Transverse colon (tissue), 4 donors: ENCODE measurements at regions of chr6 and their contacts with region 1.

Region 1: DNA sequence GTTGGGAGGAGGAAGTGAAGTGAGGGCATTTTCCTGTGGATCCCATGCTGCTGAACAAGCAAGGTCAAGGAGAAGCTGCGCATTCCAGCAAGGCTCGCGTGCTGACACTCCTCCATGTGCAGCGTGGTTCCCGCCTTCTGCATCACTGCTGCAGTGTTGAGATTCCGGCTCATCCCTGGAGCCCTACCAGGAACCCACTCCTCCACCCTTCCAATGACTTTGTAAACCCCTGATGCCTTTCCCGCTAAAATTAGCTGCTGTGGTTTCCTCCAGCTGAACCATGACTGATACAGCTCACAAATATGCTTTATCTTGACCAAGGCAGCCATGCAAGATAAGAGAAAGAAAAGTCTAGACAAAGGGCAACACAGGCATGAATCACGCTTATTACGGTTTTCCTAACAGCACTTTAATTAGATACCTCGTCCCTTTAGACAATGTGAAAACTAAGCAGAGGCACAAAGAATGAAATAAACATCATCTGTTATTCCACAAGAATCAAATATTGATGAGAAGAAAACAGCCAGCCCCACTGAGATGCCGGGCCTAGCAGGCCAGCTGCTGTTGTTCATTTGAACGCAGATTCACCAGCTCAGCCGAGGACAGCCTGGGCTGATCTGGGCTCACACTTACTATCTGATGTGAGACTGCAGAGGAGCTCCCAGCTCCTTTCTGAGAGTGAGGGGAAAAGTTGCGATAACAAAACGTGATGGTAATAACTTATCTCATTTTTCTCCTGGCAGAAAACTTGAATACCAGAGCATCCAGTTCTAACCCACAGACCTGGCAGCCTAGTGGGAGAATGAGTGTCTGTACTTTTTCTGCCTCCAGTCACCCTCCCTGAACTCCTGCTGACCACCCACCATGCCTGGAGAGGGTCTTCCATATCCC is 14.2 kb upstream of the BNIP5 start:
- DNase-seq: no peak
- H3K4me3 ChIP-seq: no peak overlapping the region
- H3K27ac ChIP-seq: no peak overlapping the region
- H3K4me1 ChIP-seq: no peaks in the 10 kb centered on the region
- H3K27me3 ChIP-seq: no peaks in the 10 kb centered on the region
- CTCF ChIP-seq: no peak
- EP300 ChIP-seq: no peak
- POLR2A ChIP-seq: no peak

Region 2: DNA sequence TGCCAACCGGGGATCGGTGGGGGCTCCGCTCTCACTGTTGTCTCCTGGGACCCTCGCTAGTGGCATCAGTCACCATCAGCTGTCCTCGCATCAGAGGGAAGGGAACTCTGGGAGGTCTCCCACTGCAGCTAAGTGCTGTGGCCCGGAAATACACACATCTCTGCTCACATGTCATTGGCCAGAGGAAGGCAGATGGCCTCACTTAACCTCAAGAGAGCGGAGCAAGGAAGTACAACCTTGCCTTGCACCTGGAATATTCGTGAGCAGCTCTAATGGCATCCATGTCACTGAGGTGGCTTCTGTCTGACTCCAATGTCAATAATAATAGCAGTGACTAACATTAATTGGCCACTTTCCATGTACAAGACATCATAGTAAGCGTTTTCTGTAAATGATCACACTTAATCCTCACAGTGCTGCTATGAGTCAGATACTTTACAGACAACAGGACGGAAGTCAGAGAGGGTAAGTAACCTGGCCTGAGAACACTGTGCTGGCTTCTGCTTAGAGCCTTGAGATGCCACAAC is 539.9 kb before region 1 on chr6:
- in situ Hi-C with region 1: no loop called
- intact Hi-C with region 1: no loop called
- DNase-seq: no peak
- H3K4me3 ChIP-seq: no peak overlapping the region
- H3K27ac ChIP-seq: no peak overlapping the region
- H3K4me1 ChIP-seq: no peaks in the 10 kb centered on the region
- H3K27me3 ChIP-seq: peaks cover 12% of the 10 kb centered on the region
- CTCF ChIP-seq: no peak
- EP300 ChIP-seq: no peak
- POLR2A ChIP-seq: no peak

Region 3: DNA sequence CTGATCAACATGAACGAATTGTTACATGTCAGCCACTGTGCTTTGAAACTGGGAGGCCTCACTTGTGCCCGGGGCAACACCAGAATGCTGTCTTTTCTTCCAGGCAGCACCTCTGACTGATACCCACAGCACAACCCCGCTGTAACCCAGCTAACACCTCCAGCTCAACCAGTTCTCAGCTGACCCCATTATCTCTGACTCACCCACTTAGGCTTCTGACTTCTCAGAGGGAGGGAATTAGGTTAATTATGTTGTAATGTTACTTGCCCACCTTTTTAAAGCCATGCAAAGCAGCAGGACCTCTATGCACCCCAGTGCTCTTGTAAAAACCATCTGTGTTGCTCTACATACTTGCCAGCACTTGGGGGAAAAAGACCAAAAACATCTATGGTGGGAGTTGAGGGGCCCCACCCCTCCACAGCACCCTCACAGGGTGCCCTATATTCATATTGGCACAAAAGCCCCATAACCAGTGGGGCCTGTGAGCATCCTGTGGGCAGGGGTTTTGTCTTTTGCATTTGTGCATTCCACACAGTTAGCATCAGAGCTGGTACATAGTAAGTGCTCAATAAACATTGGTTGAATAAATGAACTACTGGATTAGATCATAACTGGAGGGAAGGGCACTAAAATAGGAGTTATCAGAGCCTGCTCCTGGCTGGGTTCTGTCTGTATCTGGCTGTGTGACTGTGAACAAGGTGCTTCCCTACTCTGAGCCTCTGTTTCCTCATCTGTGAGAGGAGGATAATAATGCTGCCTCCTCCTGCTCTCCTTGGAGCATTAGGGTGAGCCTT is 36.5 kb before region 1 on chr6:
- in situ Hi-C with region 1: no loop called
- intact Hi-C with region 1: loop called (anchors 5 kb)
- DNase-seq: no peak
- H3K4me3 ChIP-seq: no peak overlapping the region
- H3K27ac ChIP-seq: no peak overlapping the region
- H3K4me1 ChIP-seq: peaks cover 4 to 39% (median 11%) of the 10 kb centered on the region in 4 donors
- H3K27me3 ChIP-seq: no peaks in the 10 kb centered on the region
- CTCF ChIP-seq: no peak
- EP300 ChIP-seq: no peak
- POLR2A ChIP-seq: no peak